Activated CD8-positive, alpha-beta T cell treated with anti-CD3 and anti-CD28 coated beads for 36 hours (primary cell): ENCODE measurements at regions of chr6 and their contacts with region 1.

Region 1: GRCh38 chr6:75526502-75527127 is 33.0 kb upstream of the FILIP1 start:
- DNase-seq: peak; percentile 78
- ATAC-seq: peak; percentile 75
- H3K4me3 Mint-ChIP-seq: no peak overlapping the region
- H3K27ac Mint-ChIP-seq: no peak overlapping the region
- H3K4me1 Mint-ChIP-seq: no peaks in the 10 kb centered on the region
- H3K27me3 Mint-ChIP-seq: peaks cover 17% of the 10 kb centered on the region
- CTCF ChIP-seq: peak; percentile 78

Region 2: GRCh38 chr6:75266716-75267291 is 259.8 kb before region 1 on chr6:
- CTCF ChIA-PET with region 1: interaction called, 16 read pairs
- POLR2A ChIA-PET with region 1: no interaction called
- intact Hi-C with region 1: loop called (anchors 10 kb)
- DNase-seq: no peak
- ATAC-seq: peak; percentile 64
- H3K4me3 Mint-ChIP-seq: no peak overlapping the region
- H3K27ac Mint-ChIP-seq: no peak overlapping the region
- H3K4me1 Mint-ChIP-seq: peaks cover 38% of the 10 kb centered on the region
- H3K27me3 Mint-ChIP-seq: no peaks in the 10 kb centered on the region
- CTCF ChIP-seq: peak; percentile 83

Region 3: GRCh38 chr6:75305573-75305972 is 221.0 kb before region 1 on chr6:
- CTCF ChIA-PET with region 1: interaction called, 5 read pairs
- POLR2A ChIA-PET with region 1: no interaction called
- intact Hi-C with region 1: loop called (anchors 2 kb)
- DNase-seq: no peak
- ATAC-seq: no peak
- H3K4me3 Mint-ChIP-seq: no peak overlapping the region
- H3K27ac Mint-ChIP-seq: no peak overlapping the region
- H3K4me1 Mint-ChIP-seq: no peaks in the 10 kb centered on the region
- H3K27me3 Mint-ChIP-seq: peaks cover 3% of the 10 kb centered on the region
- CTCF ChIP-seq: no peak